Right lobe of liver (tissue), 6 donors: ENCODE measurements at regions of chr16 and their contacts with region 1.

Region 1: DNA sequence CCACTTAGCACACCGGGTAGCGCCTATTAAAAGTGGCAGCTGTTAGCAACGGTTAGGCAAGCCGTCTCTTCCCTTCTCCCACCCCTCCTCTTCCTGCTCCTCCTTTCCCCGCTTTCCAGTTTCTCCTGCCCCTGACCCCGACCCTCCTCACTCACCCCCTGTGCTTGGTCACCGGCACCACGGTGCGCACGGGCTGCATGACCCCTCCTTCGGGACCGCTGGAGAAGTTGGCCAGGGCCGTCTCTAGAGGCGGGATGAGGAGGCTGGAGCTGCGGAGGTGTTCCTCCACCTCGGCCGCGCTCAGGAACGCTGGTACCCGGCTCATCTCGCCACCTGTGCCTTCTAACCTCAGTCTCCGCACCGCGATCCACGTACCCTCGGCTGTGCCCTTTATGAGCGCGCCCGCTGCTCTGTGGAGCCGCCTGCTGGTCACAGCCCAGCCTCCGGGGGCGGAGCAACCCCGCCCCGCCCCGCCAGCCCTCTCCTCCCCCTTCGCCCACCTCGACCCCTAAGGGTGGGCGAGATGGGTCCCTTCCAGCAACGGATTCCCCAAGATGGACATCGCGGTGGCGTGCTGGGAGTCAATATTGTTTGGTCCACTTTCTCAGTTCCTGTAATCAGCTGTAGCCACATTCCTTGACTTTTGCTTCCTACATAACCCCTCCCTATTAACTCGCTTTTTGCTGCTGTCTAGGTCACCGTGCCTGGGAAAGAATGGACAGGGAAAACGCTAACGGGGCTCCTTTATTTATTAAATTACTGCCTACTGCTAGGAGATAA is at the start of gene CRYM:
- DNase-seq: peak; percentile 77 to 81 (median 79)
- ATAC-seq: peak; percentile 99 to 100 (median 99)
- H3K4me3 ChIP-seq: peak within 1 kb of the TSS; percentile 45 to 59 (median 57)
- H3K27ac ChIP-seq: peak within 1 kb of the TSS in 1 of 3 donors; percentile 55
- H3K4me1 ChIP-seq: peaks cover 0 to 11% (median 0%) of the 10 kb centered on the region in 4 donors
- H3K27me3 ChIP-seq: no peaks in the 10 kb centered on the region
- CTCF ChIP-seq: peak; percentile 68 to 94 (median 92)
- POLR2A ChIP-seq: no peak
- total RNA-seq, gene CRYM: 4.4 to 14.9 (median 5.9) TPM

Region 2: DNA sequence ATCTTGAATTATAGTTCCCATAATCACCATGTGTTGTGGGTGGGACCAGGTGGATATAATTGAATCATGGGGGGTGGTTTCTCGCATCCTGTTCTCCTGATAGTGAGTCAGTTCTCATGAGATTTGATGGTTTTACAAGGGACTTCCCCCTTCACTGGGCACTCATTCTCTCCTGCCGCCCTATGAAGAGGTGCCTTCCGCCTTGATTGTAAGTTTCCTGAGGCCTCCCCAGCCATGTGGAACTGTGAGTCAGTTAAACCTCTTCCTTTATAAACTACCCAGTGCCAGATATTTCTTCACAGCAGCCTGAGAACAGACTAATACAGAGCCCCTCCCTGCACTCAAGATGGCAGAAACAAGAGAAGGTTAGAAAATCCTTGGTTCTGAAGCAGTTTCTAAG is 93.3 kb before region 1 on chr16:
- intact Hi-C with region 1: loop called in 1 of 2 experiments (anchors 5 kb)
- DNase-seq: no peak
- ATAC-seq: no peak
- H3K4me3 ChIP-seq: no peak overlapping the region
- H3K27ac ChIP-seq: no peak overlapping the region
- H3K4me1 ChIP-seq: no peaks in the 10 kb centered on the region
- H3K27me3 ChIP-seq: no peaks in the 10 kb centered on the region
- CTCF ChIP-seq: no peak
- POLR2A ChIP-seq: no peak

Region 3: GRCh38 chr16:21523411-21524067 is 245.4 kb after region 1 on chr16:
- intact Hi-C with region 1: no loop called
- DNase-seq: no peak
- ATAC-seq: no peak
- H3K4me3 ChIP-seq: no peak overlapping the region
- H3K27ac ChIP-seq: no peak overlapping the region
- H3K4me1 ChIP-seq: peaks cover 0 to 5% (median 2%) of the 10 kb centered on the region in 4 donors
- H3K27me3 ChIP-seq: no peaks in the 10 kb centered on the region
- CTCF ChIP-seq: no peak
- POLR2A ChIP-seq: no peak